ENCODE measurements at regions of chr10 and their contacts with region 1.

Region 1: GRCh38 chr10:74589226-74589673 is 237.2 kb upstream of the KAT6B start:
- DNase-seq: peak; percentile 75
- H3K4me3 Mint-ChIP-seq: peak overlapping the region; percentile 54
- H3K27ac Mint-ChIP-seq: peak overlapping the region; percentile 91
- H3K4me1 Mint-ChIP-seq: peaks cover 74% of the 10 kb centered on the region
- H3K27me3 Mint-ChIP-seq: no peaks in the 10 kb centered on the region

Region 2: DNA sequence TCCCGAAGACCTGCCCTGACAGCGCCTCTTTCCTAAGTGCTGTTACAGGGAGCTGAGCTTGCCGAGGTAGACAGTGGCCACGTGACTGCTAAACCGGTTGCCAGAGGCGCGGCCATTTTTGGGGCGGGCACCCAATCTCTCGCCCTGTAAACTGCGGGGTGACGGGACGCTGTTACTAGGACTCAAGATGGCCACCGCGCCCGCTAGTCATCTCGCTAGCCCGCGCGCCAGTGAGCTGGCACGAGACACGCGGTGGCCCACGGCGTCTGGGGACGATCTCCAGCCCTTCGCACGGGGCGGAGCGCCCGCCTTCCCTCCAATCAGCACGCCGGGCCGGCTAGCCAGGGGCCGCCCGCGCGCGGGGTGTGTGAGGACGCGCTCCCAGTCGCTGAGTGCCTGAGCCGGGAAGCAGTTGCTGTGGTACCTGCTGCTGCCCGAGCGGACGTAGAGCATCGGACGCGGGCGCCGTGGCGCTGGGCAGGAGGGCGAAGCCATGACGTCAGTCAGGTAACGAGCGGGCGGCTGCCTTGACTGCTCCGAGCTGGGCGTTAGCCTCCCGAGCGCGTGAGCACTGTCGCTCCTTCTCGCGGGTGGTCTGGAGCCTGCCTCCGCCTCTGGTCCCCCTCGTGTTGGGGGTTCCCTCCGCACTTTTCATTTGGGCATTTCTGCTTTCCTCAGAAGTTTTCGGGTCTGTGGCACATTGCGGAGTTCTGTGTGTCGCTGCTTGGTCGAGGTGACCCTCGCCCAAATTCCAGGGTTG is 412.7 kb before region 1 on chr10:
- intact Hi-C with region 1: loop called (anchors 1 kb)
- DNase-seq: peak; percentile 93
- H3K4me3 Mint-ChIP-seq: peak overlapping the region; percentile 93
- H3K27ac Mint-ChIP-seq: peak overlapping the region; percentile 88
- H3K4me1 Mint-ChIP-seq: peaks cover 45% of the 10 kb centered on the region
- H3K27me3 Mint-ChIP-seq: no peaks in the 10 kb centered on the region

Region 3: DNA sequence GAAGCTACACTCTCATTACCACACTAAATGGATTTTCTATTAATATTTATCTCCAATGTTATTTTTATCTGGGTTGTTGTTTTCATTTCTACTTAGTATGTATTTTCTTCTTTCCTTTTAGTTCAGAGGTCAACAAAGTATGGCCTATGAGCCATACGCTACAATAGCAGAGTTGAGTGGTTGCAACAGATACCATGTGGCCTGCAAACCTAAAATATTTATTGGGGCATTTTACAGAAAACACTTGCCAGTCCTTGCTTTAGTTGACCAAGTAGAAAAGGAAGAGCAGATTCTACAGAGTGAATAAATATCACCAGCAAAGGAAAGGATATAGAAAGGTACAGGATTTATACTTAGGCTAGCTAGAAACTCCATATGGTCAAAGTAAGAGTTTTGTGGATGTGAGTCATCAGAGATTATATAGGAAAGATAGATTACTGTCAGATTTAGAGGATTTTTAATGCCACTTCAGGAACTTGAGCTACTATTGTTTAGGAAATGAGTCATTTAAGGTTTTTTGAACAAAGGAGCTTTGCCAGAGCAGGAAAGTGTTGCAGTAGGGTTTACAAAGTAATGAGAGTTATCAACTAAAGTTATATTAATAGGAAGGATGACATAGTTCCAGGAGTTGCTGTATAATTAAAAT is 86.2 kb before region 1 on chr10:
- intact Hi-C with region 1: loop called (anchors 1 kb)
- DNase-seq: no peak
- H3K4me3 Mint-ChIP-seq: no peak overlapping the region
- H3K27ac Mint-ChIP-seq: peak overlapping the region; percentile 9
- H3K4me1 Mint-ChIP-seq: peaks cover 40% of the 10 kb centered on the region
- H3K27me3 Mint-ChIP-seq: no peaks in the 10 kb centered on the region

Region 4: DNA sequence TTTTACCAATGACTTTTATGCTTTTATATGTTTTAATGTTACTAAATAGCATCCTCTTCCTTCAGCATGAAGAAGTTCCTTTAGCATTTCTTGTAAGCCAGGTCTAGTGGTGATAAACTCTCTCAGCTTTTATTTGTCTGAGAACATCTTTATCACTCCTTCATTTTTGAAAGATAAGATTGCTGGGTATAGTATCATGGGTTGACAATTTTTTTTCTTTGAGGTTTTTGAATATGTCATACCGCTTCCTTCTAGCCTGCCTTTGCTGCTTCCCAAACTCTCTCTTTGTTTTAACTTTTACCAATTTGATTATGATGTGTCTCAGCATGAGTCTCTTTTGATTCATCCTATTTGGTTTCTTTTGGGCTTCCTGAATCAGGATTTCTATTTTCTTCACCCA is 129.0 kb after region 1 on chr10:
- intact Hi-C with region 1: no loop called
- DNase-seq: no peak
- H3K4me3 Mint-ChIP-seq: no peak overlapping the region
- H3K27ac Mint-ChIP-seq: no peak overlapping the region
- H3K4me1 Mint-ChIP-seq: no peaks in the 10 kb centered on the region
- H3K27me3 Mint-ChIP-seq: no peaks in the 10 kb centered on the region

Region 5: DNA sequence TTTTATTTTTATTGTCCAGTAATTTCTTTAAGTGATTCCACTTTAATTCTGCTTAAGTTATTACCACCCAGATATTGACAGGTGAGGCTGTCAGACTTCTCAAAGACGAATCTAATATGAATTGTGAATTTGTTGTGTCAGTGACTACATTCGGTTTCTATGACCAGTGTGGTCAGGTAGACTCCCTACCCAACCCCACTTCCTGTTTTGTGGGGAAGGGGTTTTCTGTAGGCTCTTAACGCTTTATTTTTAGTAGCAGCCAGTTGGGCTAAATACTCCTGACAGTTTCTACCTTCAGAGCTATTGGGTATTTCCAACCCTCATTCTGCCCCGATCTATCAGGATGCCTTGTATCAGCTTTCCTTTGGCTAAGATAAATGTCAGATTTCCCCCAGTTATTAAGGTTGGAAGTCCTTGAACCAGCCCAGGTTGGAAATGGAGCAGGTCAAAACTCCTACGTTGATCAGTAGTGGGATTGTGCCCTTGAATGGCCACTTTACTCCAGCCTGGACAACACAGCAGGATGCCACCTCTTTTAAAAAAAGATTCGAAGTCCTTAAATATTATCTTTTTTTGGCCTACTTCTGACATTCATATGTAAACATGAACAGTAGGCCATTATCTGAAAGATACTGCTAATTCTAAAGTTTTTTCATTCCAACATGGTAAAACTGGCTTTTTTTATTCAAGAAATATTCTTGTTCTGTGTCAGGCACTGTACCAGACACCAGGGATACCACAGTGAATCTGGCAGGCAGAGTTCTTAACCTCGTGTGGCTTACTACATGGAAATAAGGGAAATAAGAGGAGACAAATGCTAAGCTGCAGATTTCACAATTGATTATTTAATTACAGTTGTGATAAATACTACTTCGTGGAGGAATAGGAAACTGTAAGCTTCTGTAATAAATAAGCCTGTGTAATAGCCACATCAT is 388.9 kb after region 1 on chr10:
- intact Hi-C with region 1: loop called (anchors 2 kb)
- DNase-seq: peak; percentile 68
- H3K4me3 Mint-ChIP-seq: peak overlapping the region; percentile 47
- H3K27ac Mint-ChIP-seq: peak overlapping the region; percentile 75
- H3K4me1 Mint-ChIP-seq: peaks cover 55% of the 10 kb centered on the region
- H3K27me3 Mint-ChIP-seq: no peaks in the 10 kb centered on the region

Region 6: DNA sequence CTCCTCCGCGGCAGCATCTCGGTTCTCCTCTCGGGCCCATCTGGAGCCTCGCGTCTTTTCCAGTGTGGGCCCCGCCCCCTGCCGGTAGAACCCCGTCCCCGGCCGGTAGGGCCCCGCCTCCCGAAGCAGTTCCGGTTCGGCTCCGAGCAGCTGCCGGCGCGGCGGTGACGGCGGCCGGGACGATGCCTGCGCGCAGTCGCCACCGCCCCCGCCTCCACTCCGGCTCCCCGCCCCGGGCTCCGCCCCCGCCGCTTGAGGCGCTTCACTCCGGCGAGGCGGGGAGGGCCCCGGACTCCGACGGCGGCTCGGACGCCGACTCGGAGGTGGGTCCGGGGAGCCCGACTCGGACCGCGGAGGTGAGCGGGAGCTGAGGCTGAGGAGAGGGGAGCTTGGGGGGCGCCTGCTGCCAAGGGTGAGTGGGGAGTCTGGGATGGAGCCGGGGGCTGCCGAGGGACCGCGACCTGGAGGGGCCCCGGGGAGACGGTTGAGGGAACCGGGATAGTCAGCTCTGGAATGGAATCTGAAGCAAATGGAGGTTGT is 522.2 kb after region 1 on chr10 and contains the start of gene SAMD8:
- intact Hi-C with region 1: loop called (anchors 5 kb)
- DNase-seq: peak; percentile 97
- H3K4me3 Mint-ChIP-seq: peak within 1 kb of the TSS; percentile 95
- H3K27ac Mint-ChIP-seq: peak within 1 kb of the TSS; percentile 99
- H3K4me1 Mint-ChIP-seq: peaks cover 50% of the 10 kb centered on the region
- H3K27me3 Mint-ChIP-seq: no peaks in the 10 kb centered on the region
- total RNA-seq, gene SAMD8: 16.2 and 16.5 TPM in 2 replicates

Measured in activated T-helper 1 cell treated with anti-CD3 and anti-CD28 coated beads, Interleukin-12 subunit alpha, Interleukin-12 subunit beta, Interleukin-2, Interleukin-4 antibody, amounts not matched to agents 30 ng/mL and 10 ng/mL and 1 ng/mL, durations not matched to agents 14 hours and 24 hours and 36 hours (primary cell).